CD8-positive, alpha-beta T cell (primary cell): ENCODE measurements at regions of chr2 and their contacts with region 1.

Region 1: DNA sequence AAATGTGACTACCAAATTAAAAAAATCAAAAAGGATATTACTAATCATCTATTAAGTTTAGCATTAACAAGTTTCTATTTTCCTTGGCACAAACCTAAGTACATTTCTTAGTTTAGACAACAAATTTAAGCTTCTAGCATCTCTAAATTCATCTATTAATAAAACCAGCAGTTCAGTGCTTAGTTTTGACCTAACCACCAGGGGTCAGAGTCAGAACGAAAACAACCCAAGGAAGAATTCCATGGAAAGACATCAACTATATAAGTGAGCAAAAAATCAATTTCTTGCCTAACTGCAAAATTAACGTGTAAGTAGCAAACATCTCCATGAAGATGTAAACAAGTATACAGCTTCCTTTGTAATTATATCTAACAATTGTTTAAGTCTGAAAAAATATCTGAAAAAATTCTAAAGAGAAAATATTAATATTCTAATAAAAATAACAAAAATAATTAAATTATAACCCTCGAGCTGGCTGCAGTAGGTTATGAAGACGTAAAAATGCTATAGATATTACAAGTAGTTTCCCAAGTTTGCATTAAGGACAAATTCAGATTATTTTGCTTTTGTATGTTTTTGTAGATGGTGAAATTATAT is 83.7 kb downstream of the CERKL start:
- DNase-seq: peak in 2 of 9 experiments; percentile 11 to 28
- ATAC-seq: no peak
- H3K4me3 ChIP-seq: no peak overlapping the region
- H3K4me3 Mint-ChIP-seq: no peak overlapping the region
- H3K27ac ChIP-seq: no peak overlapping the region
- H3K27ac Mint-ChIP-seq: no peak overlapping the region
- H3K4me1 ChIP-seq: no peaks in the 10 kb centered on the region
- H3K4me1 Mint-ChIP-seq: no peaks in the 10 kb centered on the region
- H3K27me3 ChIP-seq: peaks cover 3% of the 10 kb centered on the region in 2 experiments
- H3K27me3 Mint-ChIP-seq: peaks cover 4% of the 10 kb centered on the region
- CTCF ChIP-seq: no peak

Region 2: GRCh38 chr2:181077128-181077709 is 496.0 kb before region 1 on chr2:
- CTCF ChIA-PET with region 1: no interaction called
- POLR2A ChIA-PET with region 1: no interaction called
- intact Hi-C with region 1: loop called in 1 of 2 experiments (anchors 5 kb)
- DNase-seq: peak in 3 of 9 experiments; percentile 8 to 82 (median 76)
- ATAC-seq: peak; percentile 94
- H3K4me3 ChIP-seq: no peak overlapping the region
- H3K4me3 Mint-ChIP-seq: no peak overlapping the region
- H3K27ac ChIP-seq: no peak overlapping the region
- H3K27ac Mint-ChIP-seq: no peak overlapping the region
- H3K4me1 ChIP-seq: no peaks in the 10 kb centered on the region
- H3K4me1 Mint-ChIP-seq: no peaks in the 10 kb centered on the region
- H3K27me3 ChIP-seq: no peaks in the 10 kb centered on the region
- H3K27me3 Mint-ChIP-seq: no peaks in the 10 kb centered on the region
- CTCF ChIP-seq: peak; percentile 90

Region 3: DNA sequence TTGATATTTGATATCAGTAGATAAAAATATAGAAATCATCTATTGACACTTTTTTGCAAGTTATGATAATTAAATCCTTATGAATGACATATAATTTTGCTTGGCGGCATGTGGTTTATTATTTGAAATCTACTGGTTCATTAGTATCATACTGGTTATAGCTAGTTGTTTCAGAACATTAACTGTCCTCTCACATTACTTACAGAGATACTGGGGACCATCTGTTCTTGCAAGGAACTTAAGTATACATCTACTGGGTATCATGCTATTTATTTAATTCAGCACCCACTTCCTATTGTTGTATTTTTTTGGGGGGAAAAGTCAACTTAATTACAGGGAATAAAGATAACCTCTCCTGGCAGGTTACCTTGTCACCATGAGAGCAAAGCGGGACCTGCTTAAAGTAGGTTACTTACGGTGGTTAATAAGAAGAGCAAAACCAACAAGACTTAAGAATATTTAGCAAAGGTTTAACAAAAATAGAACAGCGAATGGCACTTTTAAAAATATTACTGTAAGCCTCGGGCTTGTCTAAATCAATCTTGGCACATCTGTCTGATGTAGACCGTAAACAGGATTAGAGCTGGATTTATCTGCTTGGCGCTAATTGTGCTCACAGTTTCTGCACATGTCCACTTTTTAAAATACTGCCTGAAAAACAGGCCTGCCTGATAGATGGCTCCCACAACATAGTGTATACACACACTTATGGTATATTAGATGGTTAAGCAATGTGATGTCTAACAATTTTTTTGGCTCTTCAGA is 41.8 kb after region 1 on chr2:
- CTCF ChIA-PET with region 1: no interaction called
- POLR2A ChIA-PET with region 1: no interaction called
- intact Hi-C with region 1: no loop called
- DNase-seq: no peak
- ATAC-seq: no peak
- H3K4me3 ChIP-seq: no peak overlapping the region
- H3K4me3 Mint-ChIP-seq: no peak overlapping the region
- H3K27ac ChIP-seq: no peak overlapping the region
- H3K27ac Mint-ChIP-seq: no peak overlapping the region
- H3K4me1 ChIP-seq: no peaks in the 10 kb centered on the region
- H3K4me1 Mint-ChIP-seq: peaks cover 3% of the 10 kb centered on the region
- H3K27me3 ChIP-seq: no peaks in the 10 kb centered on the region
- H3K27me3 Mint-ChIP-seq: no peaks in the 10 kb centered on the region
- CTCF ChIP-seq: no peak

Region 4: GRCh38 chr2:181937473-181937872 is 364.2 kb after region 1 on chr2:
- CTCF ChIA-PET with region 1: no interaction called
- POLR2A ChIA-PET with region 1: no interaction called
- intact Hi-C with region 1: no loop called
- DNase-seq: no peak
- ATAC-seq: no peak
- H3K4me3 ChIP-seq: no peak overlapping the region
- H3K4me3 Mint-ChIP-seq: no peak overlapping the region
- H3K27ac ChIP-seq: no peak overlapping the region
- H3K27ac Mint-ChIP-seq: no peak overlapping the region
- H3K4me1 ChIP-seq: no peaks in the 10 kb centered on the region
- H3K4me1 Mint-ChIP-seq: no peaks in the 10 kb centered on the region
- H3K27me3 ChIP-seq: peaks cover 0 to 2% of the 10 kb centered on the region in 2 experiments
- H3K27me3 Mint-ChIP-seq: peaks cover 17% of the 10 kb centered on the region
- CTCF ChIP-seq: no peak